Transverse colon (tissue), 4 donors: ENCODE measurements at regions of chr11 and their contacts with region 1.

Region 1: DNA sequence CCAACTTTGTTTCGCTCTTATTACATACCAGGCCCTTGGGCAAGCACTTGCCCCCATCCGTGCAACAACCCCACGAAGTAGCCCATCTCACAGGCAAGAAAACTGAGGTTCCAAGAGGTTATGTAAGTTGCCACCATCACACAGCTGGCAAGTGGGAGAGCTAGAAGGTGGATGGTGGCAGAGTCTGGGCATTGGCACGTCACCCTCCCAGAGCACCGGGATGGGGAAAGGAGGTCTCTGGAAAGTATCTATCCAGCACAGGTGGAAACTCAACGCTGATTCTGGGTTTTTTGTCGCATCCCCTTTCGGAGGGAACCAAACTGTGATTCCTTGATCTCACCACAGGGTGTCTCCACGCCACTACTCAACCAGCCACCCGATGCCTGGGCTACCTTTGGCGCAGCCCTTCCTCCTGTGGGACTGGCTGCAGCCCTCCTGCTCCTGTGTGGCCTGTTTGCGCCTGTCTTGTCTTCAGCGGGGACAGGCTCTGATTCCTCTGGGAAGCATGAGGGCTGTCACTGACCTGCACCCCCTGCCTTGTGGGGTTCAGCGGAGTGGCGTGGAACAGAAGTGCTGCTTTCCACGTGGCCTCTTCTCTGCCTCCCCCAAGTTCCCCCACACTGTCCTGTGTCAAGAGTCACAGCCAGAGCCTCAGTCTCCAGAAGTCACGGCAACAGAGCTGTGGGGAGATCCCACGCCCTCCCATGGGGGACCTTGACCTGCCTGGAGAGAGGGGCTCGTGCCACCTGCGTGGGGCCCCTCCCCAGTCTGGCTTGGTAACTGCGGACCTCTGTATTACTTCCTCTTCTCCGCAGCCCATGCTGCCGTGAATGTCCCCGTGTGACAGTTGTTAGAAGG is 34.4 kb upstream of the TRIM29 start:
- DNase-seq: peak; percentile 73
- H3K4me3 ChIP-seq: no peak overlapping the region
- H3K27ac ChIP-seq: no peak overlapping the region
- H3K4me1 ChIP-seq: peaks cover 6 to 22% (median 17%) of the 10 kb centered on the region in 4 donors
- H3K27me3 ChIP-seq: peaks cover 30% of the 10 kb centered on the region
- CTCF ChIP-seq: peak; percentile 78 to 92 (median 83)
- EP300 ChIP-seq: no peak
- POLR2A ChIP-seq: no peak

Region 2: DNA sequence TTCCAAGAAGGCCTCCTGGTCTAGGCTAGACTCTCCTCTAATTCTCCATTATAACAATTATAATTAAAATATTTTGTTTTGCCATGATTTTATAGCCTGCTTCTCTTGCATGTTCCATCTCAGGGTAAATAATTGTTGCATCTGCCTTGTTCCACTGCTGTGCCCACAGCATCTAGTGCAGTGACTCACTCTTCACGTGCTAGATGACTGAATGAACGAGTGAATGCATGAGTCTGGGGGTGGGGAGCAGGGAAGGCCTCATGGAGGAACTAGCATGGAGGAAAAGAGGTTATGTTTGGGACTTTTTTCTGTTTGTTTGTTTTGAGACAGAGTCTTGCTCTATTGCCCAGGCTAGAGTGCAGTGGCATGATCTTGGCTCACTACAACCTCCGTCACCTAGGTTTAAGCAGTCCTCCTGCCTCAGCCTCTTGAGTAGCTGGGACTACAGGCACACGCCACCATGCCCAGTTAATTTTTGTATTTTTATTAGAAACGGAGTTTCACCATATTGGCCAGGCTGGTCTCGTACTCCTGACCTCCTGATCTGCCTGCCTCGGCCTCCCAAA is 33.4 kb after region 1 on chr11:
- in situ Hi-C with region 1: no loop called
- intact Hi-C with region 1: no loop called
- DNase-seq: no peak
- H3K4me3 ChIP-seq: no peak overlapping the region
- H3K27ac ChIP-seq: no peak overlapping the region
- H3K4me1 ChIP-seq: peaks cover 7 to 30% (median 25%) of the 10 kb centered on the region in 4 donors
- H3K27me3 ChIP-seq: no peaks in the 10 kb centered on the region
- CTCF ChIP-seq: no peak
- EP300 ChIP-seq: no peak
- POLR2A ChIP-seq: no peak

Region 3: GRCh38 chr11:120229451-120230424 is 57.5 kb after region 1 on chr11:
- in situ Hi-C with region 1: loop called (anchors 5 to 10 kb)
- intact Hi-C with region 1: loop called (anchors 2 kb)
- DNase-seq: no peak
- H3K4me3 ChIP-seq: no peak overlapping the region
- H3K27ac ChIP-seq: no peak overlapping the region
- H3K4me1 ChIP-seq: peaks cover 0 to 16% (median 3%) of the 10 kb centered on the region in 4 donors
- H3K27me3 ChIP-seq: no peaks in the 10 kb centered on the region
- CTCF ChIP-seq: peak; percentile 54 to 69 (median 64)
- EP300 ChIP-seq: no peak
- POLR2A ChIP-seq: no peak

Region 4: DNA sequence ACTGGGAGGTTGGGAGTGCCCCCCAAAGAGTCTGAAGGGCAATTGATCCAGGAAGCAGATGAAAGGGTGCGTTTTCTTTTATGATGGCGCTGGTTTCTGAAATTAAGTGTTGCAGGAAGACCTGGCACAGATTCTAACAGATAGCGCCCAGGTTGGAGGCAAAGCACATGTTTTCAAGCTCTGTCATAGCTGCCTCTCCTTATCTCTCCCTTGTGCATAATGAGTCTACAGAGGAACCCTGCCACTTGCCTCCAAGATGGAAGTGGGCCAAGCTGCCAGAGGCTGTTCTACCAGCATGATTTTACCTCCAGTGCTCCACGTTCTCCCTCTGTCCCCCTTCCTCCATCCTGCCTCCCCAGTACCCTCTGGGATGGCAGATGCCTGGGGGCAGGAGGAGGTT is 122.8 kb after region 1 on chr11:
- in situ Hi-C with region 1: loop called (anchors 5 to 10 kb)
- intact Hi-C with region 1: loop called (anchors 5 kb)
- DNase-seq: peak; percentile 23
- H3K4me3 ChIP-seq: no peak overlapping the region
- H3K27ac ChIP-seq: no peak overlapping the region
- H3K4me1 ChIP-seq: peaks cover 0 to 11% (median 1%) of the 10 kb centered on the region in 4 donors
- H3K27me3 ChIP-seq: peaks cover 8% of the 10 kb centered on the region
- CTCF ChIP-seq: no peak
- EP300 ChIP-seq: no peak
- POLR2A ChIP-seq: no peak

Region 5: GRCh38 chr11:120303004-120303637 is 130.8 kb after region 1 on chr11:
- in situ Hi-C with region 1: loop called (anchors 5 to 10 kb)
- intact Hi-C with region 1: loop called (anchors 5 kb)
- DNase-seq: peak; percentile 81
- H3K4me3 ChIP-seq: no peak overlapping the region
- H3K27ac ChIP-seq: peak overlapping the region in 2 of 4 donors; percentile 19 to 23
- H3K4me1 ChIP-seq: peaks cover 0 to 26% (median 14%) of the 10 kb centered on the region in 4 donors
- H3K27me3 ChIP-seq: no peaks in the 10 kb centered on the region
- CTCF ChIP-seq: peak; percentile 81 to 90 (median 88)
- EP300 ChIP-seq: no peak
- POLR2A ChIP-seq: no peak